ENCODE measurements at regions of chr2 and their contacts with region 1.

Region 1: DNA sequence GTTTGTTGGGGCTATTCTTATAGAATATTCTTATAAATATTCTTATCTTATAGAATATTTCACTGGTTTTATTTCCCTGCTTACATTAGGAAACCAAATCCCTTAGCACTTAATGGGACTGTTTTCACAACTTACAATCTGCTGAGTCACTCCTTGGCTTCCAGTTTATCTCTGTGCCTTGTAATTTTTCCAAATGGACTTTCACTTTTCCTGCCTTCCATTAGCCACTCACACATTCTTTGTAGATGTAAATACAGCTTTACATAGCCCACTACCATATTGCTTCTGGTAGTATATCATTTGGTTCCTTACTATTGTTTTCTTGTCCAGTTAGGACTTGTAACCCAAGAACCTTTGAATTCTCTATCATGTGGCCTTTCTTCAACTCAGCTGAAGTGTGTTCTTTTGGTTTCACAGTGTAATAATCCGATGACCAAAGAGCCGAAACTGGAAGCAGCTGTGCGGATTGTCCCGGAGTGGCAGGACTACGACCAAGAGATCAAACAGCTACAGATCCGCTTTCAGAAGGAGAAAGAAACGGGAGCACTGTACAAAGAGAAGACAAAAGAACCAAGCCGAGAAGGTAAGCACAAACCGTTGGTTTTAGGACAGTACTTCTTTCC is 96.1 kb downstream of the UGGT1 start:
- DNase-seq: peak in 1 of 3 donors; percentile 49
- ATAC-seq: peak; percentile 78 to 85
- H3K4me3 ChIP-seq: peak overlapping the region; percentile 18
- H3K27ac ChIP-seq: no peak overlapping the region
- H3K4me1 ChIP-seq: peaks cover 2% of the 10 kb centered on the region
- H3K27me3 ChIP-seq: no peaks in the 10 kb centered on the region

Region 2: DNA sequence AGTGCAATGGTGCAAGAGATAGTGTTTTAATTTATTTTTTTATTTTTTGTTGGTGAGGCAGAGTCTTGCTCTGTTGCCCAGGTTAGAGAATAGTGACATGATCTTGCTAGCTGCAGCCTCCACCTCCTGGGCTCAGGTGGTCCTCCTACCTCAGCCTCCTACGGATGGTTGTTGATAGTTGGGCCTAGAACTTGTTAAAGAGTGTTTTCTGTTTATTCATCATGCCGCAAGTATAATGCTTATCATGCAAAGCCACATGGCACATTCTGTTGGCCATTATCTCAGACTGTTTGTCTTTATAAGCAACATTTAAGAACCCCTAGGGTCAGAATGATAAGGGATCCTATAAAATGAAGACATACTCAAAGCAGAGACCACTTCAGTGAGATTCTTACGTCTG is 94.5 kb before region 1 on chr2:
- intact Hi-C with region 1: no loop called
- DNase-seq: no peak
- ATAC-seq: no peak
- H3K4me3 ChIP-seq: no peak overlapping the region
- H3K27ac ChIP-seq: no peak overlapping the region
- H3K4me1 ChIP-seq: peaks cover 1% of the 10 kb centered on the region
- H3K27me3 ChIP-seq: no peaks in the 10 kb centered on the region

Region 3: DNA sequence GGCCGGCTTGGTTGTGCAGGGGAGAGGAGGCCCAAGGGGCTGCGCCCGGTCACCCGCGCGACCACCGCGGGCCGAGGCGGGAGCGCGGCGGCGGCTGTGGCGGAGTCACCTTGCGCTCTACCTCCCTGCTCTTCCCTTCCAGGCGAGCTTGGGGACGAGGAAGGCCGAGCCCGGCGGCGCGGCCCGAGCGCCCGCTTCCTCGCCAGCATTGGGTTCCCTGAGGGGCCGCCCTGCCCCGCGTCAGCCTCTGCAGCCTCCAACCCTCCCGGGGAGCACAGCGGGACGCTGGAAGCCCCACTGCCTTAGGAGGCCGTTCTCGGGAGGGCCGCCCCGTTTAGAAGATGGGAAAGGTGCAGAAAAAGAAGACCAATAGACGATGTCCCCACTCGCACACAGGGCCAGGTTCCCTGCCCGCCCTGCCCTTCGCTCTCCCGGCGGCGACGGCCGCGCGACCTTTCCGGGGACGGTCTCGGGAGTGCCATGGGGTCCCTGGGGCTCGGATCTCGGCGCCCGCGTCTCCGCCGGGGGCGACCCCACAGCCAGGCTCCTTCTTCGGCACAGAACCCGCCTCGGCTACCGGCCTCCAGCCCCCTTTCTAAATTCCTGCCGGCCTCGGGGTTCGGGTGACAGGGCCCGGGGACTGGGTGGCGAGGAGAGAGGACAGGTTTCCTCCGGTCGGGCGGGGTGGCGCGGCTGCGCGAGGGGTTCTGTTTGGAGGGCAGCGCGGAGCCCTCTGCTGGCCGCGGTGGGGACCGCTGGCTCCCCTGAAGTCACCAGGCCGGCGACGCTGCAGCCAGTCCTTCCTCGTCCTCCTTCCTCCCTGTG is 46.0 kb after region 1 on chr2:
- intact Hi-C with region 1: loop called in 2 of 4 experiments (anchors 5 to 10 kb)
- DNase-seq: peak; percentile 90 to 96 (median 96)
- ATAC-seq: peak; percentile 98
- H3K4me3 ChIP-seq: peak overlapping the region; percentile 52
- H3K27ac ChIP-seq: peak overlapping the region; percentile 50
- H3K4me1 ChIP-seq: no peaks in the 10 kb centered on the region
- H3K27me3 ChIP-seq: no peaks in the 10 kb centered on the region

Measured in right cardiac atrium (tissue), 5 donors.